PC-9 (cell line): ENCODE measurements at regions of chr3 and their contacts with region 1.

Region 1: GRCh38 chr3:106609666-106610301 is 741.0 kb upstream of the CBLB start:
- DNase-seq: peak; percentile 64 to 73
- H3K4me3 ChIP-seq: no peak overlapping the region
- H3K27ac ChIP-seq: no peak overlapping the region
- H3K4me1 ChIP-seq: peaks cover 11% of the 10 kb centered on the region
- H3K27me3 ChIP-seq: no peaks in the 10 kb centered on the region
- CTCF ChIP-seq: peak; percentile 98

Region 2: GRCh38 chr3:105553851-105554250 is 1055.9 kb before region 1 on chr3:
- CTCF ChIA-PET with region 1: interaction called, 3 read pairs
- POLR2A ChIA-PET with region 1: no interaction called
- intact Hi-C with region 1: loop called (anchors 10 kb)
- DNase-seq: no peak
- H3K4me3 ChIP-seq: no peak overlapping the region
- H3K27ac ChIP-seq: no peak overlapping the region
- H3K4me1 ChIP-seq: no peaks in the 10 kb centered on the region
- H3K27me3 ChIP-seq: no peaks in the 10 kb centered on the region
- CTCF ChIP-seq: no peak

Region 3: DNA sequence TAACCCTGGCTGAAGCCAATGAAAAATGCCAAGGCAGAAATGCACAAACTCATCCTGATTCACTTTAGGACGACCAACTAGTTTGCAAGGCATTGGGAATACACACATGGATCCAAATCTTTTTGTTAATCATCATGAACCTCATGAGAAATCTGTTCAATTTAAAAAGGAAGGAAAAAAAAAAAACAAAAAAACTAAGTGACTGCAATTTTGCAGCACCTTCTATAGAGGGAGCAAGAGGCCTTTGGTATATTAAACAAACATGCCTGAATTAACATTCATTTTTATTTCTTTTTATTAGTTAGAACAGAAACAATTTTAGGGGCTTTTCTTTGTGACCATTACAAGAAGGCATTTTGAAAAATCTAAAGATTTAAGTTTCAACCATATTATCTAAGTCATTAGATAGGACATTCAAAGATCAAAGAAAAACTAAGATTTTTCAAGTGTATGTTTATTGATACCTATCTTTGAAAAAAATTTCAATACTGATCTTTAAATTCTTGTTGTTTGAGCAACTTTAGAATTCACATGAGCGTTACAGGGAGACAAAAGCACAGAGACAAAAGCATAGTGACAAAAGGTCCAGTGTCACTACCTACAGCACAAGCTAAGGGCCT is 923.4 kb before region 1 on chr3:
- CTCF ChIA-PET with region 1: interaction called, 3 read pairs
- POLR2A ChIA-PET with region 1: no interaction called
- intact Hi-C with region 1: loop called (anchors 1 kb)
- DNase-seq: peak in 1 of 2 experiments; percentile 62
- H3K4me3 ChIP-seq: no peak overlapping the region
- H3K27ac ChIP-seq: no peak overlapping the region
- H3K4me1 ChIP-seq: no peaks in the 10 kb centered on the region
- H3K27me3 ChIP-seq: no peaks in the 10 kb centered on the region
- CTCF ChIP-seq: peak; percentile 97

Region 4: DNA sequence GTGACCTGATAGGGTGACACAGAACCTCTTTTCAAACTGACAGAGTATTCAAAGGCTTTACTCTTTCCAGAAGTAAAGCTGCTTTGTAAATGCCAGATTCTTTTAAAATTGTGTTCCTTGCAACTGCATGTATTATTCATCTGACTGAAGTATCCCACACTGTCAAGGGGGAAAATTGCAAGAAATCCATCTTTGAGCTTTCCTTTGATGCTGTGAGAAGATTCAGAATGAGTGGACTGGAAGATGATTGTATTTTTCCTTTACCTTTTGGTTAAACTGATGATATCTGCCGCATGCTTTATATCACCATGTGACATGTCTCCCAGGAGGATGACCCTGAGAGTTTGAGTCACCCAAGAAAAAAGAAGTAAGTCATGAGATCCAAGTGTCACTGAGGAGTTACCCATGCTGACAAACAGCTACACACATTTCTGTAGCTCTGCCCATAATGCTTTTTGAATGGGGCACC is 490.1 kb before region 1 on chr3:
- CTCF ChIA-PET with region 1: no interaction called
- POLR2A ChIA-PET with region 1: no interaction called
- intact Hi-C with region 1: loop called (anchors 10 kb)
- DNase-seq: no peak
- H3K4me3 ChIP-seq: no peak overlapping the region
- H3K27ac ChIP-seq: no peak overlapping the region
- H3K4me1 ChIP-seq: peaks cover 65% of the 10 kb centered on the region
- H3K27me3 ChIP-seq: no peaks in the 10 kb centered on the region
- CTCF ChIP-seq: no peak

Region 5: DNA sequence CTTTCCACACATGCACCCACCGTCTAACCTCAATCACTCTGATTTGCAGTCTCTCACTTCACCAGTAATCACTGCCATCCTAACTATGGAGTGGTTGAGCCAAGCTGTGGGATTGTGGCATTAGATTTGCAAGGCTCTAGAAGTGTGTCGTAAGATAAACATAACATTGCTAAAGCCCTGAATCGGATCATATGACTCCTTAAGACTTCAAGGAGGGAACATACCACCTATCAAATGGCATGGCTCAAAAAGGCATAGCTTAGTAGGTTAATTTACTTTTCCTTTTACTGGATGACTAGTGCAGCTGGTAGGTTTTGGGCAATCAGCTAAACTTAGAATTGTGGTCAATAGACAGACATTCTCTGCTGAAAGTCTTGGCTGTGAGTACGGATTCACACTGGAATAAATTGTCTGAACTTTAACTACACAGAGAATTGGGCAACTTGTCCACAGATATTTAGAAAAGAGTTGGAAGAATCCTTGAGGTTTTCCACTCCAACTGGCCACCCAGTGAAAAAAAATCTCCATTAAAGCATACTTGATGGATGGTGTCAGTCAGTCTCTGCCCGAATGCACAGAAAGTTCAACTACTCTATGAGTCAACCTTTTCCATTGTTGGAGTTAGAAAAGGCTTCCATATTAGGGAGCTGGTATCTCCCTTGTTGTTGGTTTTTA is 264.3 kb before region 1 on chr3:
- CTCF ChIA-PET with region 1: no interaction called
- POLR2A ChIA-PET with region 1: no interaction called
- intact Hi-C with region 1: loop called (anchors 10 kb)
- DNase-seq: peak; percentile 39 to 95
- H3K4me3 ChIP-seq: peak overlapping the region; percentile 3; the same call in 1 of the 2 replicates
- H3K27ac ChIP-seq: peak overlapping the region; percentile 57
- H3K4me1 ChIP-seq: peaks cover 27% of the 10 kb centered on the region
- H3K27me3 ChIP-seq: no peaks in the 10 kb centered on the region
- CTCF ChIP-seq: no peak

Region 6: DNA sequence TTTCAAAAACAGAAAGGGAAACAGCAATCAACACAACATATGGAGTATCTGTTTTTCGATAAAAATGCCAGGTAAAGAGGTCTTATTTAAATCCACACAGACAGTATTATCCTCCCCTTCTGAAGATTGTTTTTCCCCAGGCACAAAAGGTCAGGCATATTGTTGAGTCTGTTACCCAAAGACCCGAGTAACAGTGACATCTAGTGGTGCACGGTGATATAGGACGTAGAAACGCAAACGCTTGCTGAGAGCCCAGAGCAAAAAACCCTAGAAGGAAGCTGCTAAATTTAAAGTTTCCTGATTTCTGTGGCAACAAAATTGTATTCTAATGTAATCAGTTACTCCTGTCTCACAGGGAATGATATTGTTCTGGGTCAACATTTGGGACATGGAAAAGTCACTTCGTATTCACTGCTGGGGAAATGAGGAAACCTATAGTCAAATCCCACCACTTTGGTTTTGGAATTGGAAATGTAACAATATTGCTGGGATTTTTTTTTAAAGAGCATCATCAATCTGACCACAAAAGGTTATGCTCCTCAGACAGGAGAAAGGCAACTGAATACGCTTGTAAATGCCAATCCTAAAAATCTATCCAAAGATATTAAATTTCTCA is 454.8 kb after region 1 on chr3:
- CTCF ChIA-PET with region 1: no interaction called
- POLR2A ChIA-PET with region 1: no interaction called
- intact Hi-C with region 1: loop called (anchors 5 kb)
- DNase-seq: peak; percentile 57 to 71
- H3K4me3 ChIP-seq: no peak overlapping the region
- H3K27ac ChIP-seq: no peak overlapping the region
- H3K4me1 ChIP-seq: no peaks in the 10 kb centered on the region
- H3K27me3 ChIP-seq: no peaks in the 10 kb centered on the region
- CTCF ChIP-seq: peak; percentile 98